ENCODE measurements at regions of chr21 and their contacts with region 1.

Region 1: DNA sequence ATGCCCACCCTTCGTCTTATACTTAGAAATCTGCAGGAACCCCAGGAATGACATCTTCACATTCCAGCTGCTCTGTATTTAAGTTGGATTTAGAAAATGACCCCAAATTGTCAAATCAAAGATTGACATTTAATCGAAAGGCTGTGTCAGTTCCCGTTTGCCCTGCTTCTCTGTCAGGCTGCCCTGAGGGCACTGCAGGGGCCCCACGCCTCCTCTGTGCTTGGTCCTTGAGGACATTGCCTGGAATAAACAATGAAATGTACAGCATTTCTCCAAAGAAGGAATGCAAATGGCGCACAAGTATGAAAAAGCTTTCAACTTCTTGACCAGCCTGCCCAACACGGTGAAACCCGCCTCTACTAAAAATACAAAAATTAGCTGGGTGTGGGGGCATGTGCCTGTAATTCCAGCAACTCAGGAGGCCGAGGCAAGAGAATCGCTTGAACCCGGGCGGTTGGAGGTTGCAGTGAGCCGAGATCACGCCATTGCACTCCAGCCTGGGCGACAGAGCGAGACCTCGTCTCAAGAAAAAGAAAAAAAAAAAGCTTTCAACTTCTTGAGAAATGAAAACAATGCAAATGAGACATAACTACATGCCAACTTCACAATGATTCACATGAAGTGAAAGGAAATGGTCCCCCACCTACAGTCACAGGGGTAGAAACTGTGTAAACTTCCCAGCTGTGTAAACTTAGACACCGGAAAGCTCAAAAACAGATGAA is 3.0 kb downstream of the TMPRSS3 start:
- DNase-seq: peak; percentile 96
- ATAC-seq: peak; percentile 91
- H3K4me3 ChIP-seq: peak overlapping the region; percentile 33; the same call in 1 of the 2 replicates
- H3K27ac ChIP-seq: peak overlapping the region; percentile 91
- H3K4me1 ChIP-seq: peaks cover 53% of the 10 kb centered on the region
- H3K27me3 ChIP-seq: no peaks in the 10 kb centered on the region
- CTCF ChIP-seq: no peak
- EP300 ChIP-seq: peak in 1 of 2 experiments; percentile 13; a peak in 1 of 4 replicates
- POLR2A ChIP-seq: no peak
- RAD21 ChIP-seq: peak; percentile 34

Region 2: GRCh38 chr21:42440187-42440792 is 47.4 kb after region 1 on chr21:
- CTCF ChIA-PET with region 1: no interaction called
- POLR2A ChIA-PET with region 1: interaction called, 4 read pairs
- RAD21 ChIA-PET with region 1: interaction called, 9 read pairs
- SMC1A ChIA-PET with region 1: interaction called, 7 read pairs
- in situ Hi-C with region 1: no loop called
- intact Hi-C with region 1: loop called (anchors 2 kb)
- DNase-seq: peak; percentile 70
- ATAC-seq: peak; percentile 96
- H3K4me3 ChIP-seq: no peak overlapping the region
- H3K27ac ChIP-seq: peak overlapping the region; percentile 59
- H3K4me1 ChIP-seq: peaks cover 18% of the 10 kb centered on the region
- H3K27me3 ChIP-seq: no peaks in the 10 kb centered on the region
- CTCF ChIP-seq: no peak
- EP300 ChIP-seq: peak; percentile 56 to 81; a peak in 3 of 4 replicates
- POLR2A ChIP-seq: no peak
- RAD21 ChIP-seq: peak; percentile 31; the same call in 1 of the 2 replicates

Measured in GM12878 (cell line).